GM12878 (cell line): ENCODE measurements at regions of chr13 and their contacts with region 1.

Region 1: DNA sequence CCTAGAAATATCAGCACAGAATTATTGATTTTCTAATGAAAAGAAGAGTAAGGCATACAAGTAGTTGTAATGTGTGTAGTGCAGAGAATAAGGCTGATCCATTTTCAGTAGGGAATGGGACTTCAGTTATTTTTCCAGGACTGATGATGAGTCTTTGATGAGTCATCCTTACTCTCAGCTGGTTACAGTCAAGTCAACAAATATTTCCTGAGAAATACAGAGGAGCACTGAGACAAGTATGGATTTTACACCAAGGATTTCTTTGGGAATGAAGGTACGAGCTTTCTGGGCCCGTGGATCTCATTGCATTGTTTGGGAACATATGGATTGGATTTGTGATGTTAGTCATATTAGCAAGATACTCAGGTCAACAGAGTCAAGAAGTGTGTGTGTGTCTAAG is 502.7 kb downstream of the FGF9 start:
- DNase-seq: no peak
- ATAC-seq: no peak
- H3K4me3 ChIP-seq: no peak overlapping the region
- H3K27ac ChIP-seq: no peak overlapping the region
- H3K4me1 ChIP-seq: no peaks in the 10 kb centered on the region
- H3K27me3 ChIP-seq: no peaks in the 10 kb centered on the region
- CTCF ChIP-seq: no peak
- EP300 ChIP-seq: no peak
- POLR2A ChIP-seq: no peak
- RAD21 ChIP-seq: no peak

Region 2: DNA sequence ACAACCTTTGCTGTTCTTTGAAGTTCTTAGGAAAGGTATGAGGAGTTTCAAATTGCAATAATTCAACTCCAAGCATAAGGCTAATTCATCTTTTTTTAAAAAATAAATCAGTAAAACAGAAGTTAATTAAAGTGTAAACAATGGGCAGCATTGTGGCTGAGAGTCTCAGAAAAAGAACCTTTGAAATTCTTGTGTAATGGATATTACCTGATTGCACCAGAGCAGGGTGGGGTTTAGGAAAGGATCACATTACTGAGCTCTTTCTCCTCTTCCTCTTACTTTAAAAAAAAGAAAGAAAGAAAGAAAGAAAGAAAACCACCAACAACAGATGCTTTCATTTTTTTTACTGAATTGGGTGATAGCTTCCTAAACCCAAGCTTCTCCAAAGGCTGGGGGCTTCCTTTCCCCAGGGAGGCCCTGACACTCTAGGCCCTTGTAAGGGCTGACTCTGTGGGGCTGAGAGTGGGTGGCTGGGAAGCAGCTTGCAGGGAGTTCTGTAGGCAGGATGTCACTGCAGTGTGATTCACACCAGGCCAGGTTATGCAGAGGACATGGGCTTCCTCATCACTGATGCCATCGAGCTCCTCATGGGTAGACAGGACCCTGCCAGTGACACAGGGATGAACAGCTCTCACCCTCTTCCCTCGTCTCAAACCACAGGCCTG is 61.8 kb after region 1 on chr13:
- CTCF ChIA-PET with region 1: no interaction called
- POLR2A ChIA-PET with region 1: no interaction called
- RAD21 ChIA-PET with region 1: no interaction called
- SMC1A ChIA-PET with region 1: no interaction called
- in situ Hi-C with region 1: loop called (anchors 10 kb)
- intact Hi-C with region 1: no loop called
- DNase-seq: no peak
- ATAC-seq: peak; percentile 21; the same call in 1 of the 3 replicates
- H3K4me3 ChIP-seq: no peak overlapping the region
- H3K27ac ChIP-seq: no peak overlapping the region
- H3K4me1 ChIP-seq: no peaks in the 10 kb centered on the region
- H3K27me3 ChIP-seq: no peaks in the 10 kb centered on the region
- CTCF ChIP-seq: no peak
- EP300 ChIP-seq: no peak
- POLR2A ChIP-seq: no peak
- RAD21 ChIP-seq: no peak